Sigmoid colon (tissue), 7 donors: ENCODE measurements at regions of chr18 and their contacts with region 1.

Region 1: DNA sequence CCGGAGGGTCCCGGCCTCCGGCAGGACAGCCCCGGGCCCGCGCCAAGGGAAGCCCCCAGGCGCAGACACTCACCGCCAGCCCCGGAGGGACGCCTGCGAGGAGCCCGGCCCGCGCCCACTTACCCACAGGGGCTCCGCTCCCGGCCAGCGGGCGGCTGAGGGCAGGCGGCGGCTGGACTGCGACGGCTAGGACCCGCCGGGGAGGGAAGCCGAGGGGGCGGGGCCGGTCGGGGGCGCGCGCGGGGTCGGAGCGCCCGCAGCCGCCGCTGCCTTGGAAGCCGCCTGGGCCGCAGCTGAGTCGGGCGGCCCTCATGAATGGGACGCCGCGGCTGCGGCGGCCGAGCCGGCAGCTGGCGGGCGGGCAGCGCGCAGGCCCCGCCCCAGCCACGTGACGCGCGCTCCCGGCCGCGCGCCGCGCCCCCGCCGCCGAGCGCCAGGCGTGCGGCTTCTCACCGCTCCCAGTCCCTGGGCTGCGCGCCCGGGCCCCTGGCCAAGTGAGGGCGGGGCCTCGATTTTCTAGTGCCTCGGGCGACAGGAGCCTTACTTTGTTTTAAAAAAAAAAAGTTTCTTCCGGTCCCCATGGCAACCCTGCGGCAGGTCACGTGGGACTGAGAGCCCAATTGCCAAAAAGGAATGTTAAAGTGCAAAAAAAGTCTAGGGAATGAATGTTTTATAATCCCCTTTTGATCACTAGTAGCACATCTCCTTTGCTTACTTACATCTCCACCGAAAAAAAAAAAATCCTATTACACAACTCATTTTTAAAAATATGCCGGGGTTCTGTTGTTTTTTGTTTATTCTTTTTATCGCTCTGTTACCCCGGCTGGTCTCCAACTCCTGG is at the start of gene LPIN2:
- DNase-seq: peak; percentile 99
- H3K4me3 ChIP-seq: peak within 1 kb of the TSS; percentile 75 to 100 (median 88)
- H3K27ac ChIP-seq: peak within 1 kb of the TSS; percentile 91 to 99 (median 98)
- H3K4me1 ChIP-seq: peaks cover 0 to 54% (median 33%) of the 10 kb centered on the region in 4 donors
- H3K27me3 ChIP-seq: no peaks in the 10 kb centered on the region
- CTCF ChIP-seq: no peak
- EP300 ChIP-seq: no peak
- POLR2A ChIP-seq: no peak
- total RNA-seq, gene LPIN2: 13.6 to 31.5 (median 18.0) TPM

Region 2: GRCh38 chr18:2655178-2655953 is 357.8 kb before region 1 on chr18 and contains the start of gene SMCHD1:
- intact Hi-C with region 1: loop called (anchors 5 kb)
- DNase-seq: peak; percentile 93
- H3K4me3 ChIP-seq: peak within 1 kb of the TSS; percentile 71 to 97 (median 94)
- H3K27ac ChIP-seq: peak within 1 kb of the TSS; percentile 95 to 99 (median 98)
- H3K4me1 ChIP-seq: peaks cover 0 to 37% (median 29%) of the 10 kb centered on the region in 4 donors
- H3K27me3 ChIP-seq: no peaks in the 10 kb centered on the region
- CTCF ChIP-seq: no peak
- EP300 ChIP-seq: no peak
- POLR2A ChIP-seq: peak; percentile 45 to 82
- total RNA-seq, gene SMCHD1: 69.9 to 101 (median 82.4) TPM

Region 3: DNA sequence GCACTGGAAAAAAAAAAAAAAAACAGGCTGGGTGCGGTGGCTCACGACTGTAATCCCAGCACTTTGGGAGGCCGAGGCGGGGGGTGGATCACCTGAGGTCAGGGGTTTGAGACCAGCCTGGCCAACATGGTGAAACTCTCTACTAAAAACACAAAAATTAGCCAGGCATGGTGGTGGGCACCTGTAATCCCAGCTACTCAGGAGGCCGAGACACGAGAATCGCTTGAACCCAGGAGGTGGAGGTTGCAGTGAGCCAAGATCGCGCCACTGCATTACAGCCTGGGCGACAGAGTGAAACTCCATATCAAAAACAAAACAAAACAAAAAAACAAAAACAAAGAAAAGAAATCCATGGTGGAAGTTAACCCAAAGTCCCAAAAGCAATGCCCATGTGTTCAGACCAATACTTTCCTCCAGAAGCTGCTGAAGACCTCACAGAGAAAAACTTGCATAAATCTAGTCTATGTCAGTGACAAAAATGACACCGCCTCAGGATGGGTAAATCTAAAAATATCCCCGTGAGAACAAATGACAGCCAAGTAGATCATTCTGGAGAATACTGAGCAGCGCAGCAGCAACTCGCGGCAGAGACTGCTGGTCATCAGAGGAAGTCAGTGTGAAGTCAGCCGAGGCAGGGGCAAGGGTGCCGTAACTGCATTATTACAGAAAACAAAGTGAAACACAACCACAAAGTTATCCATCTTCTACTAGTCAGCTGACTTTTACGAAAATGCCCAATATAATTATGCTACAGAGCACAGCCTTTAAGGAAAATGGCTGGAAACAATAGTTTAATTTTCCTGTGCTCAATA is 41.2 kb before region 1 on chr18:
- intact Hi-C with region 1: loop called (anchors 5 kb)
- DNase-seq: peak; percentile 69
- H3K4me3 ChIP-seq: peak overlapping the region in 1 of 4 donors; percentile 20
- H3K27ac ChIP-seq: peak overlapping the region; percentile 44 to 61 (median 48)
- H3K4me1 ChIP-seq: peaks cover 0 to 63% (median 30%) of the 10 kb centered on the region in 4 donors
- H3K27me3 ChIP-seq: no peaks in the 10 kb centered on the region
- CTCF ChIP-seq: no peak
- EP300 ChIP-seq: no peak
- POLR2A ChIP-seq: no peak

Region 4: DNA sequence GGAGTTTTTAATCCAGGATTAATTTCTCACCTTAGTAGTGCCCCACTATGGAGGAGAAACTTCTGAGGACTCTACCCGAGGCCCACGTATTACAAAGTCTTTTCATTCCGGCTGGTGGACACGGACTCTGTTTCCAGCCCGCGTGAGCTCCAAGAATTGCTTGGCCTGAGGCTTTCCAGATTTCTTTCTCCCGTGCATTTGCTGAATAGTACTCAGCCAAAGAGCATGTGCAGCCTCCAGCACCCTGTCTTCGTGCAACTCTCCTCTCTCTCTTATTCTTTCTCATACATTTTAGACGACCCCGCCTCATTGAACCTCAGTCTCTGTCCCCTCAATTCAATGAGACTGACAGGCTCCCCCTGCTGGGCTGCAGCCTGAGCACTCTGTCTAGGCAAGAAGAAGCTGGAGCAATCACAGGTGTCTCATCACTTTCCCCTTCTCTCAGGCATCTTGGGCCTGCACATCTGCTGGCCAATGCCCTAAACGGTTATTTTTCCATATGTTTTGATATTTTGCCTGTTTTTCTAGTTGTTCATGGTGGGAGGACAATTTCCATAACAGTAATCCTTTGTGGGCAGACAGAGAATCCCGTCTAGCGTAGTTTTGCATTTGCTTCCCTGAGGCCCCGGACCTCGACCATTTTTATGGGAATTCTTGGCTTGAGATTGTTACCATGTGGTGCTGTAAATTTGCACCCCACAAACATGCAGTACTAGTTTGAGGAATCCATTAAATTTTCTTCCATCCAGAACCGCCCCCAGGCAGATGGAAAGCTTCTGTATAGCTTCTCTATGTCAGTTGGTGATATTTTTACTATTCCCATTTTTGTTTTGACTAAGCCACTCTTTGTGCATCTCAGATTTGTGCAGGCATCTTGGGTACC is 49.9 kb after region 1 on chr18:
- intact Hi-C with region 1: loop called (anchors 10 kb)
- DNase-seq: peak; percentile 79
- H3K4me3 ChIP-seq: peak overlapping the region in 3 of 4 donors; percentile 3 to 28 (median 25)
- H3K27ac ChIP-seq: peak overlapping the region in 1 of 4 donors; percentile 10
- H3K4me1 ChIP-seq: peaks cover 0 to 18% (median 10%) of the 10 kb centered on the region in 4 donors
- H3K27me3 ChIP-seq: no peaks in the 10 kb centered on the region
- CTCF ChIP-seq: peak; percentile 51 to 83 (median 72)
- EP300 ChIP-seq: no peak
- POLR2A ChIP-seq: no peak

Region 5: DNA sequence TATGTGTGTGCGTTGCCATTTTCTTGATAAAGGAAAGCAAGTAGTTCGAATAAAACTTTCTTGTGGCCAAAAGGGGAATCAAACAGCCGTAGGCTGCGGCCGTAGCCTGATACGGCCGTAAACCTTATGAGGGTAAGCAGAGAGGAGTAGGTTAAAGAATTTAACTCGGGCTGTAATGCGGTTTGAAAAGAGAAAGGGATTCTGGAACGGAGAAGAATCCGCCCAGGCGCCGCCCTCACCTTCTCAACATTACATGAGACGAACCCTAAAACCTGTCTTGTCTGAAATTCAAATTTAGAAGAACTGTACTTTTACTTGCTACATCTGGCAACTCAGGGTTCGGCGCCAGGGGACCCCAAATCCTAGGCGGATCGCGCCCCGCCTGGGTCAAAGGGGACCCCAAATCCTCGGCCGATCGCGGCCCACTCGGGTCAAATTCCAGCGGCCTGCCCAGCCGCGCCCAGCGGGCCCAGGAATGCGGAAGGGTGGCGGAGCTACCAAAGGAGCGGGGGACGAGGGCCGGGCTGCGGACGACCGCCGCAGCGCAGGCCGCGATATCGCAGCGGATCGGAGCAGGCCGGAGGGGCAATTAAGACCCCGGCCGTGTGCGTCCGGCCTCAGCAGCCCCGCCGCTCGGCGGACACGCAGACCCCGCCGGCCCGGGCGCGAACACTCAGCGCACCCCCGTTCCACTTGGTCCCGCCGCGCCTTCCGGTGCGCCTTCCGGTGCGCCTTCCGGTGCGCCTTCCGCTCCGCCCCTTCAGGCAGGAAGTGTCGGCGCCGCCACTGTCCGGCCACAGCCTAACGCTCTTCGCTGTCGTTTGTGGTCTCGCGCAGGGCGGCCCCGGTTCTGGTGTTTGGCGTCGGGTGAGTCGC is 248.4 kb after region 1 on chr18 and contains the start of gene MYL12B:
- intact Hi-C with region 1: loop called (anchors 5 kb)
- DNase-seq: peak; percentile 86
- H3K4me3 ChIP-seq: peak within 1 kb of the TSS; percentile 72 to 99 (median 81)
- H3K27ac ChIP-seq: peak within 1 kb of the TSS; percentile 88 to 94 (median 90)
- H3K4me1 ChIP-seq: peaks cover 0 to 60% (median 55%) of the 10 kb centered on the region in 4 donors
- H3K27me3 ChIP-seq: no peaks in the 10 kb centered on the region
- CTCF ChIP-seq: no peak
- EP300 ChIP-seq: no peak
- POLR2A ChIP-seq: peak; percentile 76 to 83
- total RNA-seq, gene MYL12B: 155 to 227 (median 181) TPM